OCI-LY7 (cell line): ENCODE measurements at regions of chr1 and their contacts with region 1.

Region 1: DNA sequence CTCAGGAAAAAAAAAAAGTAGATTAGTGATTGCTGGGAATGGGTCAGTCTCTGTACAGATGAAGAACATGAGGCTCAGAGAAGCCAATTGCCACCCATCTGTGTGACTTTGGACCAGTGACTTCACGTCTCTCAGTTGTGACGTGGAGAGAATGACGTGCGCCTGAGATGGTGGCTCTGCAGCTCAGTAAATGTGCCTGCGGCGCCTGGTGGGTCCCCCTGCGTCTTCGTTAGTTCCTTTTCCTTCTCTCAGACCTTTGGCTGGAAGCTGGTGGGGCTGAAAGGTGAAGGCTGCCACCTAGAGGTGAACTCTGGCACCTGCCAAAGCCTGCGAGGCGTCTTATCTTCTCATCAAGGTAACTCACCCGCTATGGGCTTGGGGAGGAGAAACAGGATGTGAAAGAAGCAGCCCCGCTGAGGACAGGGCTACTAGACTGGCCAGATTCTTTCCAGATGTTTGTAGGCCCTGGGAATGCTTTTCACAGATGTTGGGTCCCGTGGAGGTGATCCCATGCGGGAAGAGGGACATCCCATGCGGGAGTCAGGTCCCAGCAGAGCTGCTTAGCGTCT is 8.7 kb upstream of the E2F2 start:
- DNase-seq: peak; percentile 97
- H3K4me3 ChIP-seq: peak overlapping the region; percentile 47
- H3K27ac ChIP-seq: peak overlapping the region; percentile 46
- H3K4me1 ChIP-seq: peaks cover 63% of the 10 kb centered on the region
- CTCF ChIP-seq: peak; percentile 99

Region 2: DNA sequence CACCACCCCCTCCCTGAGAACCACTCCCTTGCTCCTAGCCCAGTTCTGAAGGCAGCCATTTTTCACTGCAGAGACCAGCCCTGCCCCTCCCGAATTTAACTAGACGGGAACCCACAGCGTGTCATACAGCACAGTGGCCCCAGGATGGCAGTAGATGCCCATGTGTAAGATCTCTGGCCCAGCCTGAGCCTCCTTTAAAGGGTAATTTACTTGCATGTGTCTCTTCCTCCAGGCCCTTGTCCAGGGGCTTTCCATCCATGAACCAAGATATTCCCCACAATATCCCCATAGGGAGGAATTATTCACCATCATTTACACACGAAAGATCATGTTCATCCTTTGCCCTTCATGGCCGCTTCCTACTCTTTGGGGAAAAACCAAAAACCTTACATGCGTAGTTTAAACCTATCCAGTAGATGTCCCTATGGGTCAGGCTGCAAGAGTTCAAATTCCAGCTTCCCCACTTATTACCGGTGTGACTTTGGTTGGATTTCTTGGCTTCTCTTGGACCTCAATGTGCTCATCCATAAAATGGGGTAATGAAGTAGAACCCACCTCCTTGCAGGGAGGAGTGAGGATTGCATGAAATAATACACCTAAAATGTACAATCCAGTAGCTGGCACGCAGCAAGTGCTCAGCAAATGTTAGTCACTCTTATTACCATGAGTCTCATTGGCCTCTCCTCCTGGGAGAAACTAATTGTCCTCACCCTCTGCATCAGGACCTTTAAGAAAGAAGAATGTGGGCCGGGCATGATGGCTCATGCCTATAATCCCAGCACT is 563.1 kb before region 1 on chr1:
- CTCF ChIA-PET with region 1: no interaction called
- POLR2A ChIA-PET with region 1: no interaction called
- intact Hi-C with region 1: loop called (anchors 5 kb)
- DNase-seq: peak; percentile 78
- H3K4me3 ChIP-seq: no peak overlapping the region
- H3K27ac ChIP-seq: no peak overlapping the region
- H3K4me1 ChIP-seq: no peaks in the 10 kb centered on the region
- CTCF ChIP-seq: peak; percentile 95

Region 3: GRCh38 chr1:23303524-23303923 is 236.3 kb before region 1 on chr1:
- CTCF ChIA-PET with region 1: no interaction called
- POLR2A ChIA-PET with region 1: no interaction called
- intact Hi-C with region 1: no loop called
- DNase-seq: no peak
- H3K4me3 ChIP-seq: no peak overlapping the region
- H3K27ac ChIP-seq: no peak overlapping the region
- H3K4me1 ChIP-seq: no peaks in the 10 kb centered on the region
- CTCF ChIP-seq: no peak

Region 4: GRCh38 chr1:23484253-23485001 is 55.4 kb before region 1 on chr1:
- CTCF ChIA-PET with region 1: no interaction called
- POLR2A ChIA-PET with region 1: interaction called, 6 read pairs
- intact Hi-C with region 1: loop called (anchors 5 kb)
- DNase-seq: peak; percentile 92
- H3K4me3 ChIP-seq: peak overlapping the region; percentile 75
- H3K27ac ChIP-seq: peak overlapping the region; percentile 41
- H3K4me1 ChIP-seq: peaks cover 49% of the 10 kb centered on the region
- CTCF ChIP-seq: no peak

Region 5: DNA sequence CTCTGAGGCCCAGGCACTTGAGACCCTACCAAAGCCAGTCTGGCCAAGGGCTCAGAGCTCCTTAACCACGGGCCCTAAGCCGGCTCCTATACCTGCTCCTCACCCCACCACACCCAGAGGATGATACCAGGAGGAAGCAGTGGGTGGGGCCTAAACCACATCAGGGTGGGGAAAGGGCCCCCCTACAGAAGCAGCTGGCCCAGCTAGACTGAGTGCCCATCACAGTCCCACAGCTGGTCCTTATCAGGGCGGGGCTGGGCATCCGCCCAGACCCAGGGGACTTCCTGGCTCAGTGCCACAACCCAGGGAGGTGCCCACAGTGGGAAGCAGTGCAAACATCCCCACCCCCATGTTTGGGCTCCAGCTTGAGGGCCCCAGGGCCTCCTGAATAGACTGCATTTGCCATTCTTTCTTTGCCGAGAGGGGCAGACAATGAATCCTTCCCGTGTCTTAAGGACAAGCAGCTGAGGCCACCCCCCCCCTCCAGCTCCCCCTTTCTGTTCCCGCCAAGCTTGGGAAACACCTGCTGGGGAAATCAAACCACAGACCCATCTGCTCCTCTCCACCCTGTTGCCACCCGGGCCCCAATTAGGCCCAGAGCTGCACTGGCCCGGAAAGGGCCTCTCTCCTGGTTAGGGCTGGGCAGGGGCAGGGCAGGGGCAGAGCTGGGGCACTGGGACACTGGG is 14.9 kb before region 1 on chr1:
- CTCF ChIA-PET with region 1: interaction called, 5 read pairs
- POLR2A ChIA-PET with region 1: interaction called, 20 read pairs
- intact Hi-C with region 1: loop called (anchors 1 kb)
- DNase-seq: peak; percentile 89
- H3K4me3 ChIP-seq: peak overlapping the region; percentile 84
- H3K27ac ChIP-seq: peak overlapping the region; percentile 98
- H3K4me1 ChIP-seq: peaks cover 61% of the 10 kb centered on the region
- CTCF ChIP-seq: no peak

Region 6: GRCh38 chr1:23664837-23665795 is 125.3 kb after region 1 on chr1:
- CTCF ChIA-PET with region 1: interaction called, 3 read pairs
- POLR2A ChIA-PET with region 1: interaction called, 5 read pairs
- intact Hi-C with region 1: loop called (anchors 1 kb)
- DNase-seq: peak; percentile 81
- H3K4me3 ChIP-seq: no peak overlapping the region
- H3K27ac ChIP-seq: peak overlapping the region; percentile 70
- H3K4me1 ChIP-seq: peaks cover 50% of the 10 kb centered on the region
- CTCF ChIP-seq: peak; percentile 78